ENCODE measurements at regions of chr16 and their contacts with region 1.

Region 1: DNA sequence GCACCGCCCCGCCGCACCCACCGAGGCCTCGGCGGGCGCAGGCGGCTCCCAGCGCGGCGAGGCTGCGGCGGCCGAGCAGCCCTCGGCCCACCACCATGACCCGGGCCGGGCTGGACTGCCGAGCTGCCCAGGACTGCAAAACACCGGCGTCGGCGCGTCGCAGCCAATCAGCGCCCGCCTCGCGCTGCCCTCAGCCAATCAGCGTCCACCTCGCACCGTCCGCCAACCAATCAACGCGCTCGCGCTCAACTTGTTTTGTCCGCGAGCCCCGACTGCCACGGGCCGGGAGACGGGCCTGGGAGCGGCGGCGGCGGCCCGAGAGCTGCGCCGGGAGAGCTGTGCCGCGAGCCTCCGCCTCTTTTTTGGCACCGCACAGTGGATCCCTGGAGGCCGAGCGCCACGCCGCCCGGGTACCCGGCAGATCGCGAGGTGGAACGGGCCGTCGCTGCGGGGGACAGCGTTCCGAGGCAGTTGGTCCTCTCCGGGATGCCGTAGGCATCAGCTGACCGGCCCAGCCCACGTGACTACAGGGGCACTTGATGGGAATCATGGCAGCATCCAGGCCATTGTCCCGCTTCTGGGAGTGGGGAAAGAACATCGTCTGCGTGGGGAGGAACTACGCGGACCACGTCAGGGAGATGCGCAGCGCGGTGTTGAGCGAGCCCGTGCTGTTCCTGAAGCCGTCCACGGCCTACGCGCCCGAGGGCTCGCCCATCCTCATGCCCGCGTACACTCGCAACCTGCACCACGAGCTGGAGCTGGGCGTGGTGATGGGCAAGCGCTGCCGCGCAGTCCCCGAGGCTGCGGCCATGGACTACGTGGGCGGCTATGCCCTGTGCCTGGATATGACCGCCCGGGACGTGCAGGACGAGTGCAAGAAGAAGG is at the starts of genes FAHD1 and HAGH:
- DNase-seq: peak; percentile 91 to 96 (median 92)
- H3K4me3 ChIP-seq: peak within 1 kb of the TSS; percentile 51 to 100 (median 97)
- H3K27ac ChIP-seq: peak within 1 kb of the TSS in 58 of 59 donors; percentile 67 to 97 (median 90)
- H3K27me3 ChIP-seq: no peaks in the 10 kb centered on the region
- CTCF ChIP-seq: peak in 26 of 56 donors; percentile 7 to 49 (median 29)
- total RNA-seq, gene FAHD1: 13.0 to 36.9 (median 23.5) TPM
- total RNA-seq, gene HAGH: 85.9 to 195 (median 142) TPM

Region 2: DNA sequence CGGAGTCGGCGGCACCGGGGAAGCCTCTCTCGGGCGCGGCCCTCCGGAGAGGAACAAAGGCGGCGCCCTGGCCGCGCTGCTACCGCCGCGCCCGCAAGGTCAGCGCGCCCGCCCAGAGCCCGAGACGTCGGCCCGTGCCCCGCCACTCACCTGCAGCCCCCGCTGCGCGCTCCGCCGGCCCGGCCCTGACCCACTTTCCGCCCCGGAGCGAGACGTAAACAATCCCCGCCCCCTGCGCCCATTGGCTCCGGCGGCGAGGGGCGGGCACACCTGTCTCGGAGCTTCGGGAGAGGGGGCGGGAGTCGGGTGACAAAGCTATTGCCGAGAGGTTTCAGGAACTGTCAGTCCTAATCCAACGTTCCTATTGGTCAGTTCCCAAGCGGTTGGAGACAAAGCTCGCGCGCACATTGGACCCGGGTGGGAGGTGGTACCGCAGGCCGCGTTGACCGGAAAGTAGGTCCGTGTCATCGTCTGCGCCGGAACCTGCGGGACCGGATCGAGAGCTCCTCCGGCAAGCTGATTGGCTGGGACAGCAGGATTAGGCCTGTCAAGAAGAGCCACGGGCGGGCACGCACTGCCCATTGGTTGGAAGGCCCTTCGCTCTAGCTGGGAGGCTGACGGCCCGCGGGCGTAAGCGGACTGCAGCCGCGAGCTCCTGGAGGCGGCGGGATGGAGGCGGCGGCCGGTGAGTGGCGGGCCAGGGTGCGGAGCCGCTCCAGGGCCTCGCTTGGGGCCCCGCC is 44.4 kb before region 1 on chr16 and contains the starts of genes NUBP2 and SPSB3:
- intact Hi-C with region 1: loop called (anchors 1 to 5 kb)
- DNase-seq: peak; percentile 100
- H3K4me3 ChIP-seq: peak within 1 kb of the TSS; percentile 64 to 99 (median 89)
- H3K27ac ChIP-seq: peak within 1 kb of the TSS in 54 of 59 donors; percentile 23 to 93 (median 84)
- H3K27me3 ChIP-seq: no peaks in the 10 kb centered on the region
- CTCF ChIP-seq: peak in 10 of 56 donors; percentile 13 to 33 (median 22)
- total RNA-seq, gene NUBP2: 29.7 to 55.7 (median 39.2) TPM
- total RNA-seq, gene SPSB3: 34.3 to 62.3 (median 48.9) TPM

Region 3: GRCh38 chr16:1959269-1960049 is 132.5 kb after region 1 on chr16 and contains the start of gene NDUFB10:
- intact Hi-C with region 1: loop called in 1 of 2 experiments (anchors 5 kb)
- DNase-seq: peak; percentile 79 to 97 (median 89)
- H3K4me3 ChIP-seq: peak within 1 kb of the TSS; percentile 63 to 100 (median 95)
- H3K27ac ChIP-seq: peak within 1 kb of the TSS; percentile 57 to 97 (median 90)
- H3K27me3 ChIP-seq: no peaks in the 10 kb centered on the region
- CTCF ChIP-seq: peak; percentile 52 to 97 (median 88)
- total RNA-seq, gene NDUFB10: 74.8 to 178 (median 131) TPM